ENCODE measurements at regions of chr5 and their contacts with region 1.

Region 1: DNA sequence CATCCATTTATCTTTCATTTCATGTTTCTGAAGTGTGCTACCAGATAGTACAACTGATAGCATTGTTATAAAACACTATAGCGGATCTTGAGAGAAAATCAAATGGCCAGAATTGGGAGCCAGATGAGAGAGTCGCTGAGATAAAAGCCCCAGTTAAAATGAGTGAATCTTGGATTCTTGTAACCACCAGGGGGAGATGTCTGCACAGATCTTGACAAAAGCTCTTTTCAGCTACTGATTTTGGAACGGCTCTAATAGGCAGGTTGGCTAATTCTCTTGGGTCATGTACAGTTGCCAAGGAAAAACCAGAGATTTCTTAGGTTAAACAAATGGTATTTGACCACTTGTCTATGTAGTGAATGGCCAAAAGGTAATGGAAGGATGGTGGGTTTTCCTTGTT is 21.7 kb downstream of the F2RL2 start:
- DNase-seq: peak in 5 of 14 experiments; percentile 5 to 73 (median 68)
- ATAC-seq: peak; percentile 74
- H3K4me3 ChIP-seq: no peak overlapping the region
- H3K4me3 Mint-ChIP-seq: no peak overlapping the region
- H3K27ac ChIP-seq: no peak overlapping the region
- H3K27ac Mint-ChIP-seq: no peak overlapping the region
- H3K4me1 ChIP-seq: no peaks in the 10 kb centered on the region
- H3K4me1 Mint-ChIP-seq: peaks cover 6% of the 10 kb centered on the region
- H3K27me3 ChIP-seq: no peaks in the 10 kb centered on the region
- H3K27me3 Mint-ChIP-seq: no peaks in the 10 kb centered on the region
- CTCF ChIP-seq: peak; percentile 71

Region 2: DNA sequence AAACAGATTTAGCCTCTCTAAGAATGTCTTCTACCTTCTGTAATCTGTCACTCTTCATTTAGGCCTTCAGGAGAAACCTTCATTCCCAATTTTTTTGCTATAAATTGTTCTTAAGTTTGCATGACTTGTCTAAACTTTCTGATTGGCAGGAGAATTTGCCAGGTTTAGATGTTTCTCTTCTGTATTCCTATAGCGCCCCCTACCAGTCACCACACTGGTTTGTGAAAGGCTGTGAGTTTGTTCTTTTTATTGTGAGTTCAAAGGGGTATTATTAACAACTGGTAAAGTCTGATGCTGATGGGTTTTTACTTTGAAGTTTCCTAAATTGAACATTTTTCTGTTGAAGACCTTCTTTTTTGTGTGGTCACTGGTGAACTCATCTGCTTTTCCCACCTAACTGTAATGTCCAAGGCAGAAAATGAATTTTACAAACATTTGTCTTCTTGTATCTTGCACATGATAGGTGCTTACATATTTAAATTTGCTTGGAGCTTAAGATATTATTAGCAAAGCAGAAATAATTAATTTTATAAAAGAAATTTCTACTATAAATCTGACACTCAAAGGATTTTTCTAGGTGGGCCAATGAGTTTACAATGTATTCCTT is 40.1 kb after region 1 on chr5:
- CTCF ChIA-PET with region 1: interaction called, 5 read pairs
- POLR2A ChIA-PET with region 1: no interaction called
- intact Hi-C with region 1: loop called (anchors 1 to 5 kb)
- DNase-seq: peak; percentile 26 to 78 (median 48)
- ATAC-seq: peak; percentile 57
- H3K4me3 ChIP-seq: no peak overlapping the region
- H3K4me3 Mint-ChIP-seq: no peak overlapping the region
- H3K27ac ChIP-seq: no peak overlapping the region
- H3K27ac Mint-ChIP-seq: no peak overlapping the region
- H3K4me1 ChIP-seq: no peaks in the 10 kb centered on the region
- H3K4me1 Mint-ChIP-seq: no peaks in the 10 kb centered on the region
- H3K27me3 ChIP-seq: no peaks in the 10 kb centered on the region
- H3K27me3 Mint-ChIP-seq: no peaks in the 10 kb centered on the region
- CTCF ChIP-seq: peak; percentile 72

Region 3: GRCh38 chr5:77015938-77016569 is 414.6 kb after region 1 on chr5:
- CTCF ChIA-PET with region 1: no interaction called
- POLR2A ChIA-PET with region 1: no interaction called
- intact Hi-C with region 1: loop called in 1 of 2 experiments (anchors 10 kb)
- DNase-seq: peak in 3 of 14 experiments; percentile 23 to 36 (median 34)
- ATAC-seq: no peak
- H3K4me3 ChIP-seq: no peak overlapping the region
- H3K4me3 Mint-ChIP-seq: no peak overlapping the region
- H3K27ac ChIP-seq: no peak overlapping the region
- H3K27ac Mint-ChIP-seq: no peak overlapping the region
- H3K4me1 ChIP-seq: no peaks in the 10 kb centered on the region
- H3K4me1 Mint-ChIP-seq: no peaks in the 10 kb centered on the region
- H3K27me3 ChIP-seq: no peaks in the 10 kb centered on the region
- H3K27me3 Mint-ChIP-seq: peaks cover 41% of the 10 kb centered on the region
- CTCF ChIP-seq: no peak

Measured in CD4-positive, alpha-beta T cell (primary cell).